ENCODE measurements at regions of chr3 and their contacts with region 1.

Region 1: GRCh38 chr3:10224784-10225665 is 23.2 kb upstream of the TATDN2 start:
- DNase-seq: peak; percentile 79 to 93 (median 85)
- H3K4me3 ChIP-seq: no peak overlapping the region
- H3K27ac ChIP-seq: no peak overlapping the region
- H3K4me1 ChIP-seq: peaks cover 0 to 11% of the 10 kb centered on the region in 2 donors
- H3K27me3 ChIP-seq: no peaks in the 10 kb centered on the region
- CTCF ChIP-seq: peak; percentile 57 to 95 (median 90)
- POLR2A ChIP-seq: no peak

Region 2: GRCh38 chr3:10164546-10165393 is 60.3 kb before region 1 on chr3 and contains the start of gene IRAK2:
- intact Hi-C with region 1: loop called in 1 of 2 experiments (anchors 5 kb)
- DNase-seq: peak; percentile 72 to 83 (median 79)
- H3K4me3 ChIP-seq: peak within 1 kb of the TSS; percentile 66 to 96 (median 86)
- H3K27ac ChIP-seq: peak within 1 kb of the TSS in 3 of 5 donors; percentile 72 to 85 (median 74)
- H3K4me1 ChIP-seq: peaks cover 3 to 10% of the 10 kb centered on the region in 2 donors
- H3K27me3 ChIP-seq: no peaks in the 10 kb centered on the region
- CTCF ChIP-seq: peak; percentile 54 to 97 (median 76)
- POLR2A ChIP-seq: peak in 1 of 2 donors; percentile 80
- total RNA-seq, gene IRAK2: 2.5 to 8.7 (median 6.2) TPM

Region 3: DNA sequence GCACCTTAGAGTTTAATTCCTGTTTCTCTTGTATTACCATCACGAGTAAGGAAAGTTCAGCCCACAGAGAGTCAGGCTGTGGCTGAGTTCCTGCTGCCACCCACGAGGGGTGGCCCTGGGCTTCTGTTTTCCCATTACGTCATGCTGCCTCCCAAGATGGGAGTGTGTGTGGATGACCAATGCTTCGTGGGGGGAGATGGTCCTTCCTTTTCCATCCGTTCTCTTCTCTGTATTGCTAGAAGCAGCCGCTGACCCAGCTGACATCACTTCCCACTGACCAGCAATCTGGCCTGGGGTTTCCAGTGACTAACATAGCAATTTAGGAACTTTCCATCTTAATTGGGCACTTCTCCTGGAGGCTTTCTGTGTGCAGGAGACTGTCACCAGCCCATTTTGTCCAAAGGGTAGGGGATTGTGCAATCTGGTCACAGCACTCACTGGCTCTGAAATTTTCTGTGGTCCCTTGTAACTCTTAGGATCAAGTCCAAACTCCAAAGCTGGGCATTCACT is 51.0 kb before region 1 on chr3:
- intact Hi-C with region 1: loop called in 1 of 2 experiments (anchors 10 kb)
- DNase-seq: peak; percentile 46 to 88 (median 80)
- H3K4me3 ChIP-seq: no peak overlapping the region
- H3K27ac ChIP-seq: peak overlapping the region in 4 of 5 donors; percentile 30 to 85 (median 68)
- H3K4me1 ChIP-seq: peaks cover 0 to 16% of the 10 kb centered on the region in 2 donors
- H3K27me3 ChIP-seq: no peaks in the 10 kb centered on the region
- CTCF ChIP-seq: no peak
- POLR2A ChIP-seq: no peak

Measured in adrenal gland (tissue), 19 donors.